Pancreas (tissue), 10 donors: ENCODE measurements at regions of chr4 and their contacts with region 1.

Region 1: DNA sequence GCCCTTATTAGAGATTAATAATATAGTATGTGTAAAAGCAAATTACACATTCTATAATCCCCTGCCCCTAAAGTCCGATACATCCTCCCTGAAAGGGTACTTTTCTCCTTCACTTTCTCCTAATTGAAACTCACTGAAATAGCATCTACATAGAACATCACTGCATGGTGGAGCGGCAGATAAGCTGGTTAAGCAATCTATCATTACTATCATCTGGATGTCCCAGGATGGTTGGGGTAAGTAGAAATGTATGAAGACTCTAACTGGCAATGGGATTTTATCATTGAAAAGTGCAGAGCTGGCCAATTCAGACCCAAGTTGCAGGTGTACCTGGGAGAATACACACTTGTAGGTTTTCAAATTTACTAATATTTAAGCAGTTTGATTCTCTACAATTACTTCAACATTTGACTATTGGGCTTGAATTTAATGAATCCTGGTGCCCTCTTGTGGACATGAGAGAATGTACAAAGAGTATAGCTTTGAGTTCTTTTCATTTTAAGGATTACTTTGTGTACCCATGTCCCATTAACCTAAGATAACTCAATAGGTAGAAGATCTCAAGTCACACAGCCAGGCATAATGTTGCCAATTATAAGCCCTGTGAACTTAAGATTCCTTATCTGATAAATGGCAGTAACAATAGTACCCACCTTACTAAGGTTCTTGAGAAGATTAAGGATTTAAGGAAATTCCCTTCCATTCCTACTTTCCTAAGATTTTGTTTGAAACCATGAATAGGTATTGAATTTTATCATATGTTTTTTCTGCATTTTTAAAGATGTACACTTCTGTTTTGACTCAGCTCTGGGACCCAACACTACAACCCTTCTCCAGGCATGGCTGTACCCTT is 69.8 kb downstream of the SHROOM3 start:
- DNase-seq: no peak
- ATAC-seq: peak; percentile 68 to 85 (median 80)
- H3K4me3 ChIP-seq: no peak overlapping the region
- H3K27ac ChIP-seq: no peak overlapping the region
- H3K4me1 ChIP-seq: no peaks in the 10 kb centered on the region
- H3K27me3 ChIP-seq: no peaks in the 10 kb centered on the region
- CTCF ChIP-seq: peak; percentile 30 to 44 (median 36)

Region 2: GRCh38 chr4:76430519-76431388 is 74.1 kb before region 1 on chr4:
- intact Hi-C with region 1: loop called in 2 of 3 experiments (anchors 5 kb)
- DNase-seq: peak in 1 of 6 donors; percentile 29
- ATAC-seq: peak in 3 of 4 donors; percentile 77 to 84 (median 79)
- H3K4me3 ChIP-seq: peak overlapping the region in 1 of 4 donors; percentile 18
- H3K27ac ChIP-seq: no peak overlapping the region
- H3K4me1 ChIP-seq: peaks cover 0 to 4% (median 0%) of the 10 kb centered on the region in 3 donors
- H3K27me3 ChIP-seq: no peaks in the 10 kb centered on the region
- CTCF ChIP-seq: peak; percentile 13 to 49 (median 42)

Region 3: GRCh38 chr4:76752861-76753501 is 248.1 kb after region 1 on chr4:
- intact Hi-C with region 1: loop called (anchors 2 to 10 kb)
- DNase-seq: no peak
- ATAC-seq: peak in 1 of 4 donors; percentile 32
- H3K4me3 ChIP-seq: no peak overlapping the region
- H3K27ac ChIP-seq: no peak overlapping the region
- H3K4me1 ChIP-seq: no peaks in the 10 kb centered on the region
- H3K27me3 ChIP-seq: no peaks in the 10 kb centered on the region
- CTCF ChIP-seq: no peak

Region 4: GRCh38 chr4:76758290-76758882 is 253.5 kb after region 1 on chr4:
- intact Hi-C with region 1: loop called (anchors 2 to 10 kb)
- DNase-seq: peak in 2 of 6 donors; percentile 18 to 48
- ATAC-seq: peak; percentile 75 to 90 (median 86)
- H3K4me3 ChIP-seq: no peak overlapping the region
- H3K27ac ChIP-seq: no peak overlapping the region
- H3K4me1 ChIP-seq: no peaks in the 10 kb centered on the region
- H3K27me3 ChIP-seq: no peaks in the 10 kb centered on the region
- CTCF ChIP-seq: peak; percentile 60 to 81 (median 70)